Activated B cell treated with CpG ODN at 0.5 μM for 24 hours (primary cell): ENCODE measurements at regions of chr9 and their contacts with region 1.

Region 1: DNA sequence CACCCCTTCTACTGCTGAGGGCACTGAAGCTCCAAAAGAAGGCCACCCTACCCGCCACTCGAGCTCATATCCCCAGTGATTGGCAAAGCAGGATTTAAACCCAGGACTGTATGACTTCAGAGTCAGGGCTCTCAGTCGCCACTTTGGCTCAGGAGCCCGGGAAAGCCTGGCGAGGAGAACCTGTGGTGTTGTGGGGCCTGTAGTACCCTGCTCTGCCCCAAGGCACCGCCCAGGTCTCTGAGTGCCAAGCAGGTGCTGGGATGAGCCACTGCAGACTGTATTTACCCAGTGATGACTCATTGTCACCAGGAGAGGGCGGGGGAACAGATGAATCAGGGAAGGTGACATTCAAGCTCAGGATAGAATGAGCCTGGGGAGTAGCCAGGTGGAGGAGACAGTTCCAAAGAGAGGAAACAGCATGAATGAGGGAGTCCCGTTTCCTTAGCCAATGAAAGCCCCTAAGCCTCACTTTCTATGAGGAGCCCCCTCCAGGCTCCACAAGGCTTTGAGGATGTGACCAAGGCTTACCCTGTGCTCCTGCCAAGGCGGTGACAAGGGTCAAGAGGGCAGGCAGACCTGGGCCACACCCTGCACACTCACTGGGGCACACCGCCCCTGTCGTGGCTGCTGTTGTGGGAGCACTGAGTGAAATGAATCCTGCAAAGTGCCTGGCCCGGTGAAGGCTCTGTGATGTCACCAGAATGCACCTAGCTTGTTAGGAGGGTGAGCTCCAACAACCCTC is 17.8 kb upstream of the DPM2 start:
- DNase-seq: no peak
- ATAC-seq: peak; percentile 99
- H3K4me3 Mint-ChIP-seq: no peak overlapping the region
- H3K27ac Mint-ChIP-seq: peak overlapping the region; percentile 79
- H3K4me1 Mint-ChIP-seq: peaks cover 61% of the 10 kb centered on the region
- H3K27me3 Mint-ChIP-seq: no peaks in the 10 kb centered on the region
- CTCF ChIP-seq: no peak

Region 2: GRCh38 chr9:127943731-127944144 is 11.7 kb before region 1 on chr9:
- CTCF ChIA-PET with region 1: interaction called, 35 read pairs
- POLR2A ChIA-PET with region 1: interaction called, 6 read pairs
- intact Hi-C with region 1: loop called (anchors 1 kb)
- DNase-seq: peak; percentile 71
- ATAC-seq: peak; percentile 93
- H3K4me3 Mint-ChIP-seq: no peak overlapping the region
- H3K27ac Mint-ChIP-seq: peak overlapping the region; percentile 73
- H3K4me1 Mint-ChIP-seq: peaks cover 21% of the 10 kb centered on the region
- H3K27me3 Mint-ChIP-seq: no peaks in the 10 kb centered on the region
- CTCF ChIP-seq: no peak

Region 3: DNA sequence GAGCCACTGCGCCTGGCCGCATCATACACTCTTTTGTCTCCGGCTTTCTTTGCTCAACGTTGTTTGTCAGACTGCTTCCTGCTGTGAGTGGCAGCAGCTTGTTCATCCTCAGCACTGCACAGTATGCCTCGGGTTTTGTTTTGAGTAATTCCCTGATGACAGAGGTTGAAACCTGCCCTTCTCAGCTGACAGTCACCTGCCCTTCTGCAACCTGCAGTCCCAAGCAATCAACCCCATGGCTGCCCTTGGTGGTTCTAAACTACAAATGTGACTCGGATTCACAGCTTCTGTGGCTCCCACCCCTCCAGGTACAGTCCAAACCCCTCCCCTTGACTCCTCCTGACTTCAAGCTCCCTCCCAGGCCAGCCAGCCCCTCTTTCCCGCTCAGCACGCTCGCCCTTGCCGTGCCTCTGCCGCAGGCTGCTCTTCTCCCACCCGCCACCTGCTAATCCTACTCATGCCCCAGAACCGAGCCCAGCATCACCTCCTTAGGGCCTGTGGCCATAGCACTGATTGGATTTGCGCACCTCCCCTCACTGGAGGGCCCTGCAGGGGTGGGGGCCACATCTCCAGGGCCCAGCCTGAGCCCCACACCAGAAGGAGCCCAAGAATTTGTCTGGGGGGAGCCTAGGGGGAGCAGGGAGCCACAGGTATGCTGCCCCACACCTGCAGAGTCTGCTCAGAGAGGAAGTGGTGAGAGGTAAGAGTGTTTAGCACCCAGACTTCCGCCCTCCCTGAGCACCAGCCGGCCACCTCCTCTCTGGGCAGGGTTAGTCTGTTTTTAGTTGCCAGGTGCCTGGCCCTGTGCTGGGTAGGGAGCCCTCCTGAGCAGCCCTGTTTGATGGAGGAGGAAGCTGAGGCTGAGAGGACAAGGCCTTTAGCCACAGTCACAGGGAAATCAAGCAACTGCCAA is 15.2 kb after region 1 on chr9:
- CTCF ChIA-PET with region 1: interaction called, 10 read pairs
- POLR2A ChIA-PET with region 1: interaction called, 16 read pairs
- intact Hi-C with region 1: loop called (anchors 1 kb)
- DNase-seq: peak; percentile 50
- ATAC-seq: peak; percentile 74
- H3K4me3 Mint-ChIP-seq: peak overlapping the region; percentile 79
- H3K27ac Mint-ChIP-seq: peak overlapping the region; percentile 97
- H3K4me1 Mint-ChIP-seq: peaks cover 100% of the 10 kb centered on the region
- H3K27me3 Mint-ChIP-seq: no peaks in the 10 kb centered on the region
- CTCF ChIP-seq: no peak

Region 4: GRCh38 chr9:128026773-128027541 is 71.5 kb after region 1 on chr9:
- CTCF ChIA-PET with region 1: interaction called, 180 read pairs
- POLR2A ChIA-PET with region 1: interaction called, 67 read pairs
- intact Hi-C with region 1: no loop called
- DNase-seq: no peak
- ATAC-seq: peak; percentile 14
- H3K4me3 Mint-ChIP-seq: peak overlapping the region; percentile 67
- H3K27ac Mint-ChIP-seq: peak overlapping the region; percentile 88
- H3K4me1 Mint-ChIP-seq: peaks cover 86% of the 10 kb centered on the region
- H3K27me3 Mint-ChIP-seq: no peaks in the 10 kb centered on the region
- CTCF ChIP-seq: no peak

Region 5: DNA sequence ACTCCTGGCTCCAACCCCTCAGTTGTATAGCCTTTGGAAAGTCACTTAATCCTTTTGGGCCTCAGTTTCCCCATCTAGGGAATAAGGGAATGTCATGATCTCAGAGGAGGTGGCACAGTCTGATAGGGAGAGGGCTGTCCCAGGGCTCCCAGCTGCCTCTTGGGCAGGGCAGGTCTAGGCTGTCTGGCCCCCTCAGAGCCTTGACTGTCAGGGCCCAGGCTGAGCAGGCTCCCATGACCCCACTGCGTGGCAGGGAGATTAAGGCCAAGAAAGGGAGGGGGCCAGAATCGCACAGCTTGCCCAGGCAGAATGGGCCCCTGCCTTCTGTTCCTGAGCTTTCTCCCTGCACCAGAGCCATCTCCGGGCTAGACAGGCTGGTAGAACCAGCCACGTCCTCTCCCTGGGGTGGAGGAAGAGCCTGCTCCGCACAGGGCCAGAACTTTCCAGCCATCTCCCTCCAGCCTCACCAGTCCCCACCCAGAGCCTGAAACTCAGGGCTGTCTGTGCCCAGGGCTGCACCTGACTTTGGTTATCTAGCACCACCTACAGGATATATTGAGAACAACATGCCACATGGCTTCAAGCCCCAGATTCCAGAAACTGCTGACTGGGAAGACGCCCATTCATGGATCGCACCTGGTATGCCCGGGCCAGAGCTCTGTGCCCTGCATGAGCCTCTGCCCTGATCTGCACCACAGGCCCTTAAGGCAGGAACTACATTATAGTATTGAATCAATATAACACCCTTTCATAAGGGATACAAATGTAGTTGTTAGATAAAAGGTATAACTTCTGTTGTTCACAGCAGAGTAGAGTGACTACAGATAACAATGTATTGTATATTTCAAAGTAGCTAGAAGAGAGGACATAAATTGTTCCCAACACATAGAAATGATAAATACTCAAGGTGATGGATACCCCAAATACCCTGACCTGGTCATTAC is 79.6 kb after region 1 on chr9:
- CTCF ChIA-PET with region 1: interaction called, 180 read pairs
- POLR2A ChIA-PET with region 1: interaction called, 67 read pairs
- intact Hi-C with region 1: loop called (anchors 1 kb)
- DNase-seq: peak; percentile 42
- ATAC-seq: peak; percentile 83
- H3K4me3 Mint-ChIP-seq: no peak overlapping the region
- H3K27ac Mint-ChIP-seq: peak overlapping the region; percentile 75
- H3K4me1 Mint-ChIP-seq: peaks cover 34% of the 10 kb centered on the region
- H3K27me3 Mint-ChIP-seq: no peaks in the 10 kb centered on the region
- CTCF ChIP-seq: peak; percentile 68

Region 6: GRCh38 chr9:128081056-128081455 is 125.6 kb after region 1 on chr9:
- CTCF ChIA-PET with region 1: interaction called, 5 read pairs
- POLR2A ChIA-PET with region 1: interaction called, 3 read pairs
- intact Hi-C with region 1: loop called (anchors 1 kb)
- DNase-seq: no peak
- ATAC-seq: no peak
- H3K4me3 Mint-ChIP-seq: no peak overlapping the region
- H3K27ac Mint-ChIP-seq: no peak overlapping the region
- H3K4me1 Mint-ChIP-seq: peaks cover 42% of the 10 kb centered on the region
- H3K27me3 Mint-ChIP-seq: no peaks in the 10 kb centered on the region
- CTCF ChIP-seq: no peak

Region 7: GRCh38 chr9:128117613-128118471 is 162.4 kb after region 1 on chr9:
- CTCF ChIA-PET with region 1: interaction called, 10 read pairs
- POLR2A ChIA-PET with region 1: interaction called, 7 read pairs
- intact Hi-C with region 1: loop called (anchors 1 kb)
- DNase-seq: peak; percentile 98
- ATAC-seq: peak; percentile 48
- H3K4me3 Mint-ChIP-seq: no peak overlapping the region
- H3K27ac Mint-ChIP-seq: peak overlapping the region; percentile 56
- H3K4me1 Mint-ChIP-seq: peaks cover 42% of the 10 kb centered on the region
- H3K27me3 Mint-ChIP-seq: no peaks in the 10 kb centered on the region
- CTCF ChIP-seq: peak; percentile 99